Panc1 (cell line): ENCODE measurements at regions of chr10 and their contacts with region 1.

Region 1: GRCh38 chr10:124062390-124062789 is 31.0 kb downstream of the CHST15 start:
- DNase-seq: no peak
- ATAC-seq: no peak
- H3K4me3 ChIP-seq: no peak overlapping the region
- H3K27ac ChIP-seq: no peak overlapping the region
- H3K4me1 ChIP-seq: peaks cover 9% of the 10 kb centered on the region
- H3K27me3 ChIP-seq: no peaks in the 10 kb centered on the region
- CTCF ChIP-seq: no peak

Region 2: DNA sequence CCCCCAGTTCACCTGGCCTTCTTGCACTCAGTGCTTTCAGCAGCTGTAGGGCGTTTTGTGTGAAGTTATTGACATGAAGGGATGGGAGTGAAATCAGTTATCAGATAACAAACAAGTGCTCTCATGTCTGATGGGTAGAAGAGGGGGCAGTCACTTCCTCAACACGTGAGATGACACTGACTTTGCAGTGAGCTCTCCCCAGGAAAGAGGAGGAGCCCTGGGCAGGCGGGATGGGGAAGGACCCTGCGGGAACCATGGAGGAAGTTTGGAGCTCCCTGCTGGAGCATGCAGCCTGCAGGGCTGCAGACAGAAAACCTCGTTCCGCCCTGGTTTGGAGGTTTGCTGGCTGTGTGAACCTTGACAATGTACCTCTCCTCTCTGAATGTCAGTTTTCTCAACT is 357.6 kb before region 1 on chr10:
- CTCF ChIA-PET with region 1: no interaction called
- POLR2A ChIA-PET with region 1: no interaction called
- in situ Hi-C with region 1: no loop called
- intact Hi-C with region 1: no loop called
- DNase-seq: no peak
- ATAC-seq: no peak
- H3K4me3 ChIP-seq: no peak overlapping the region
- H3K27ac ChIP-seq: no peak overlapping the region
- H3K4me1 ChIP-seq: no peaks in the 10 kb centered on the region
- H3K27me3 ChIP-seq: peaks cover 25% of the 10 kb centered on the region
- CTCF ChIP-seq: no peak

Region 3: GRCh38 chr10:123848564-123849457 is 213.6 kb before region 1 on chr10:
- CTCF ChIA-PET with region 1: no interaction called
- POLR2A ChIA-PET with region 1: interaction called, 12 read pairs
- in situ Hi-C with region 1: no loop called
- intact Hi-C with region 1: no loop called
- DNase-seq: no peak
- ATAC-seq: no peak
- H3K4me3 ChIP-seq: no peak overlapping the region
- H3K27ac ChIP-seq: peak overlapping the region; percentile 51; the same call in 1 of the 2 replicates
- H3K4me1 ChIP-seq: no peaks in the 10 kb centered on the region
- H3K27me3 ChIP-seq: peaks cover 2% of the 10 kb centered on the region; the same call in 1 of the 2 replicates
- CTCF ChIP-seq: no peak